CD4-positive, alpha-beta memory T cell (primary cell): ENCODE measurements at regions of chr17 and their contacts with region 1.

Region 1: DNA sequence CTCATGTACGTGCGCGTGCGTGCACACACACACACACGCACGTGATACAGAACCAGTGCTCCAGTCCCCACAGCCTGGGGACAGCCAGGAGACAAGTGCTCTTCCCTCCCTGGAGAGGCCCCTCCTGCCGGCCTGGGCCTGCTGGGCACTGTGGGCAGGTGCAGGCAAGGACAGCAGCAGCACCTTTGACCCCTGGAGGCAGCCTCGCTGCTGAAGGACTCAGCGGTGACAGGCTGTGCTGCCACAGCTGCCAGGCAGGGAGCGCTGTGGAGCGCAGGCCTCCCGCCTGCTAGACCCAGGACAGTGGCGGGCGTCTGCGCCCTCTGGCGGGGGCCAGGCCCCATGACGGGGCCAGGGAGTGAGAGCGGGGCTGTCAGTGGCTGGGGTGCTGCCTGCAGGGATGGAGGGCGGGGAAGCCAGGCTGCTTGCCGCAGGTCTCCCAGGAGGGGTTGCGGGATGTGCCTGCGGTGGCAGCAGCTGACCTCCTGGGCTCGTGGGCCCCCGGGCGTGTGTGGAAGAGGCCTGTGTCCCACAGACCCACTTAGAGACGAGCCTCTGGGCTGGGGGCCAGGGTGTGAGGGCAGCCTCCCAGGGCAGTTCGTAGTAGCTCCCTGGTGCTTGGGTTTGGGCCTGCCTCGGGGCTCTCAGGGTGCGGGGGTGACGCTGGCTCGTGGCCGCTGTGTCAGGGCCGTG is 63.5 kb upstream of the PVALEF start:
- DNase-seq: peak; percentile 81 to 91 (median 88)
- H3K4me3 ChIP-seq: no peak overlapping the region
- H3K4me3 Mint-ChIP-seq: no peak overlapping the region
- H3K27ac ChIP-seq: no peak overlapping the region
- H3K27ac Mint-ChIP-seq: peak overlapping the region in 3 of 7 donors; percentile 47 to 72 (median 56)
- H3K4me1 ChIP-seq: peaks cover 29% of the 10 kb centered on the region
- H3K4me1 Mint-ChIP-seq: peaks cover 0 to 16% (median 9%) of the 10 kb centered on the region in 4 donors
- H3K27me3 ChIP-seq: no peaks in the 10 kb centered on the region
- H3K27me3 Mint-ChIP-seq: no peaks in the 10 kb centered on the region

Region 2: GRCh38 chr17:80426681-80427326 is 675.0 kb before region 1 on chr17:
- CTCF ChIA-PET with region 1: interaction called, 15 read pairs
- POLR2A ChIA-PET with region 1: no interaction called
- intact Hi-C with region 1: no loop called
- DNase-seq: peak; percentile 83 to 87 (median 86)
- H3K4me3 ChIP-seq: no peak overlapping the region
- H3K4me3 Mint-ChIP-seq: no peak overlapping the region
- H3K27ac ChIP-seq: no peak overlapping the region
- H3K27ac Mint-ChIP-seq: peak overlapping the region in 4 of 7 donors; percentile 47 to 80 (median 68)
- H3K4me1 ChIP-seq: peaks cover 13% of the 10 kb centered on the region
- H3K4me1 Mint-ChIP-seq: peaks cover 4 to 13% (median 9%) of the 10 kb centered on the region in 4 donors
- H3K27me3 ChIP-seq: no peaks in the 10 kb centered on the region
- H3K27me3 Mint-ChIP-seq: no peaks in the 10 kb centered on the region

Region 3: GRCh38 chr17:80991645-80992076 is 110.1 kb before region 1 on chr17 and contains the start of gene CHMP6:
- CTCF ChIA-PET with region 1: interaction called, 8 read pairs
- POLR2A ChIA-PET with region 1: no interaction called
- intact Hi-C with region 1: loop called (anchors 1 kb)
- DNase-seq: peak; percentile 69 to 82 (median 78)
- H3K4me3 ChIP-seq: peak within 1 kb of the TSS; percentile 52 to 63
- H3K4me3 Mint-ChIP-seq: peak within 1 kb of the TSS; percentile 79 to 86 (median 84)
- H3K27ac ChIP-seq: peak within 1 kb of the TSS; percentile 70
- H3K27ac Mint-ChIP-seq: peak within 1 kb of the TSS; percentile 66 to 91 (median 86)
- H3K4me1 ChIP-seq: peaks cover 33% of the 10 kb centered on the region
- H3K4me1 Mint-ChIP-seq: peaks cover 9 to 34% (median 21%) of the 10 kb centered on the region in 4 donors
- H3K27me3 ChIP-seq: no peaks in the 10 kb centered on the region
- H3K27me3 Mint-ChIP-seq: peaks cover 0 to 1% of the 10 kb centered on the region in 2 donors
- total RNA-seq, gene CHMP6: 41.4 to 42.3 TPM

Region 4: GRCh38 chr17:81018044-81018802 is 83.5 kb before region 1 on chr17:
- CTCF ChIA-PET with region 1: interaction called, 28 read pairs
- POLR2A ChIA-PET with region 1: interaction called, 9 read pairs
- intact Hi-C with region 1: loop called (anchors 1 kb)
- DNase-seq: peak in 4 of 5 donors; percentile 39 to 49 (median 44)
- H3K4me3 ChIP-seq: peak overlapping the region; percentile 20 to 54
- H3K4me3 Mint-ChIP-seq: peak overlapping the region; percentile 82 to 95 (median 86)
- H3K27ac ChIP-seq: peak overlapping the region; percentile 69
- H3K27ac Mint-ChIP-seq: peak overlapping the region; percentile 80 to 98 (median 95)
- H3K4me1 ChIP-seq: peaks cover 32% of the 10 kb centered on the region
- H3K4me1 Mint-ChIP-seq: peaks cover 15 to 52% (median 29%) of the 10 kb centered on the region in 4 donors
- H3K27me3 ChIP-seq: no peaks in the 10 kb centered on the region
- H3K27me3 Mint-ChIP-seq: no peaks in the 10 kb centered on the region

Region 5: DNA sequence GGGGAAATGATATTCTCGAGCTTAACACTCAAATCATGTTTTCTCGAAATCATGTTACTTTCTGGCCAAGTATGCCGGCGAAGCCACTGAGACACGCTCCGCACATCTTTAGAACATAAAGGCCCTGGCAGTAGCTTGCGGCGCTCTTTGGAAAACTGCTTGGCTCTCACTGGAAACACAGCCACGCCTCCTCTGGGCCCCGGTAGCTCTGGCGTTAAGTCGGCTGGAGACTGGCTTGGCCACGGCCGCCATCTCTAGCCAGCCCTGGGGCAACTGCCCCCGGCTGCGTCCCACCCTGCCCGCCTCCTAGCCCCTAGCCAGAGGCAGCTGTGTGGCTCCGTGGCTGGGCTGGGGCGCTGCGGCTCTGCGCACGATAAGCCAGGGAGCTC is 76.0 kb before region 1 on chr17:
- CTCF ChIA-PET with region 1: interaction called, 28 read pairs
- POLR2A ChIA-PET with region 1: interaction called, 9 read pairs
- intact Hi-C with region 1: loop called (anchors 1 kb)
- DNase-seq: no peak
- H3K4me3 ChIP-seq: no peak overlapping the region
- H3K4me3 Mint-ChIP-seq: no peak overlapping the region
- H3K27ac ChIP-seq: no peak overlapping the region
- H3K27ac Mint-ChIP-seq: no peak overlapping the region
- H3K4me1 ChIP-seq: peaks cover 8% of the 10 kb centered on the region
- H3K4me1 Mint-ChIP-seq: peaks cover 6 to 11% (median 8%) of the 10 kb centered on the region in 4 donors
- H3K27me3 ChIP-seq: no peaks in the 10 kb centered on the region
- H3K27me3 Mint-ChIP-seq: peaks cover 7 to 14% of the 10 kb centered on the region in 2 donors

Region 6: GRCh38 chr17:81086789-81087551 is 14.8 kb before region 1 on chr17:
- CTCF ChIA-PET with region 1: interaction called, 10 read pairs
- POLR2A ChIA-PET with region 1: interaction called, 6 read pairs
- intact Hi-C with region 1: no loop called
- DNase-seq: peak in 2 of 5 donors; percentile 14 to 19
- H3K4me3 ChIP-seq: no peak overlapping the region
- H3K4me3 Mint-ChIP-seq: peak overlapping the region in 1 of 8 donors; percentile 17
- H3K27ac ChIP-seq: no peak overlapping the region
- H3K27ac Mint-ChIP-seq: peak overlapping the region in 3 of 7 donors; percentile 13 to 53 (median 17)
- H3K4me1 ChIP-seq: peaks cover 5% of the 10 kb centered on the region
- H3K4me1 Mint-ChIP-seq: peaks cover 3 to 14% (median 7%) of the 10 kb centered on the region in 4 donors
- H3K27me3 ChIP-seq: no peaks in the 10 kb centered on the region
- H3K27me3 Mint-ChIP-seq: no peaks in the 10 kb centered on the region

Region 7: DNA sequence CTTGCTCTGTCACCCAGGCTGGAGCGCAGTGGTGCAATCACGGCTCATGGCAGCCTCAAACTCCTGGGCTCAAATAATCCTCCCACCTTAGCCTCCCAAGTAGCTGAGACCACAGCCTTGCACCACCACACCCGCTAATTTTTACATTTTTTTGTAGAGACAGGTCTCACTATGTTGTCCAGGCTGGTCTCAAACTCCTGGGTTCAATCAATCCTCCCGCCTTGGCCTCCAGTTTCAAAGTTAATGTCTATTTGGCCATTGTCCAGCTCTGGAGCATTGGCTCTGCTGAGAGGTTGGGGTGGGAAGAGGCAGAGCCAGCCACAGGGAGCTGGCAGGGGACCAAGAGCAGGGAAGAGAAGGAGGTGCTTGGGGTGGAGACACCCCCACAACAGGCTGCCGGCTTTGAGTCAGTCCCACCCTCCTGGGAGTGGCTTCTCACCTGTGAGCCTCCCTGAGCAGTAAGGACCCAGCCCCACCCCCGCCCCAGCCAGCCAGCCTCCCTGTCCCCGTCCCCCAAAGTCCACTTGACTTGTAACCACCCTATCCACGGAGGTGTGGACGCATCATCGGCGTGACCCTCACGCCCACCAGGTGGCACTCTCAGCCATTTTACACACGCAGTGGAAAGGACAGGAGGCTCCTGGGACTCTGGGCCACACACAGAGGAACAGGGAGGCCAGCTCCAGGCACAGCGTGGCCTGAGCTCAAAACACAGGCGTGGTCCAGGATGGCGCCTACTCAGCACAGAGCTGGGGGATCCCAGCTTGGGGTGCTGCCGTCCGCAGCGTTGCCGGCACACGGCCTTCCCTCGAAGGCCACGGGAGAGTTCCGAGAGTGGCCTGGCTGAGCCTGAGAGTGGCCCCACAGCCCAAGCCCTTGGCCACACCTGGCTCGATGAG is 40.8 kb after region 1 on chr17:
- CTCF ChIA-PET with region 1: no interaction called
- POLR2A ChIA-PET with region 1: no interaction called
- intact Hi-C with region 1: no loop called
- DNase-seq: peak; percentile 41 to 51 (median 49)
- H3K4me3 ChIP-seq: no peak overlapping the region
- H3K4me3 Mint-ChIP-seq: no peak overlapping the region
- H3K27ac ChIP-seq: no peak overlapping the region
- H3K27ac Mint-ChIP-seq: no peak overlapping the region
- H3K4me1 ChIP-seq: no peaks in the 10 kb centered on the region
- H3K4me1 Mint-ChIP-seq: peaks cover 0 to 3% (median 0%) of the 10 kb centered on the region in 4 donors
- H3K27me3 ChIP-seq: no peaks in the 10 kb centered on the region
- H3K27me3 Mint-ChIP-seq: peaks cover 2% of the 10 kb centered on the region in 2 donors

Region 8: GRCh38 chr17:81238817-81239600 is 137.2 kb after region 1 on chr17 and contains the starts of genes NDUFAF8 and TEPSIN:
- CTCF ChIA-PET with region 1: no interaction called
- POLR2A ChIA-PET with region 1: no interaction called
- intact Hi-C with region 1: loop called (anchors 2 kb)
- DNase-seq: peak; percentile 95 to 99 (median 98)
- H3K4me3 ChIP-seq: peak within 1 kb of the TSS; percentile 76 to 89
- H3K4me3 Mint-ChIP-seq: peak within 1 kb of the TSS; percentile 91 to 96 (median 94)
- H3K27ac ChIP-seq: peak within 1 kb of the TSS; percentile 80
- H3K27ac Mint-ChIP-seq: peak within 1 kb of the TSS; percentile 86 to 95 (median 92)
- H3K4me1 ChIP-seq: peaks cover 37% of the 10 kb centered on the region
- H3K4me1 Mint-ChIP-seq: peaks cover 13 to 42% (median 34%) of the 10 kb centered on the region in 4 donors
- H3K27me3 ChIP-seq: no peaks in the 10 kb centered on the region
- H3K27me3 Mint-ChIP-seq: no peaks in the 10 kb centered on the region
- total RNA-seq, gene NDUFAF8: 40.1 to 45.1 TPM
- total RNA-seq, gene TEPSIN: 111 to 126 TPM